ENCODE measurements at regions of chr14 and their contacts with region 1.

Region 1: DNA sequence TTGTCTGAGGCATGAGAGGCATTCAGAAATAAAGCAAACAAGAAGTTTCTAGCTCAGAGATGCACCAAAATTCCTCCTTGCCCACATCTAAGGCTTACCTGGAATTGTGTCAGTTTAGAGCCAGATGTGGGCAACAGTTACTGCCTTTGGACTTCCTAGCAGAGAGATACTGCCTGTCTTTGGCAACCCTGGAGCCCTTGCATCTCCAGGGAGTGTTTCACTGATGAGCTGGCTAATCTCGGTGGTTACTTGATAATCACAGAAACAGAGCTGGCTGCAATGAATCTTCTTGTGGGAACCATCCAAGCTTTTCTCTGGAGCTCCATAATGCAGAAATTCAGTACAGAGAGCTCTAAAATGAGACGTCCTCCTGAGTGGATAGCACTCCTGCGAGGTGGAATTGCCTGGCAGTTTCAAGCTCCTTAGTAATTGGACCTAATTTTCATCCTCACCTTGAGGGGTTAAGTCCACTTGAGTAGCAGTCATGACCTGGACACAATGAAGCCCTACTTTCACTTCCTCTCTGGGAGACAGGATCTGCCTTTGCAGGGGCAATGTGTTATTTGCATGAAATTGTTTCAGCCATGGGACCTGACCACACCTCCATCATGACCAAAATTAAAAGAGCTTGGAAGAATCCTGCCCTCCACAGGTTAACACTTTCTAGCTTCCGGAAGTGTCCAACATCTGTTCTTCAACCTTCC is 108.8 kb upstream of the ARHGAP5 start:
- DNase-seq: peak; percentile 88
- H3K4me3 ChIP-seq: no peak overlapping the region
- H3K27ac ChIP-seq: no peak overlapping the region
- H3K4me1 ChIP-seq: peaks cover 32% of the 10 kb centered on the region
- H3K27me3 ChIP-seq: no peaks in the 10 kb centered on the region
- CTCF ChIP-seq: no peak

Region 2: DNA sequence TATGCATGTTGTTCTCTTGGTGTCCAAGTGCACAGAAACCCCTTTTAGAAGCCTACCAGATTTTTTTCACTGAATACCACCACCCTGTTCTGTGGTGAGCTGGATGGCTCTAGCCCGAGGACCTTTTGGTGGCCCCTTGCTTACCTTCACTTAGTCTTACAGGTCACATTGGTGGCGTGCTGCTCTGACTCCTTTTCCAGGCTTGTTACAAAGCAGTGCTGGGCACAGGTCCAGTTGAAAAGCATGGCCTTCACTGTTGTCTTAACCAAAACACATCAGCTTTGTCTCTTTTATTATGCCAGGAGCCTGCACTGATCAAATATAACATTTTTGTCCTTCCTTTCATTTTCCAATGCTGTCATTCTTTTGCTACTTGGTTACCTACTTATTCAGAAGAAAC is 65.3 kb after region 1 on chr14:
- CTCF ChIA-PET with region 1: no interaction called
- dilution Hi-C with region 1: loop called (anchors 5 kb)
- in situ Hi-C with region 1: no loop called
- intact Hi-C with region 1: no loop called
- DNase-seq: no peak
- H3K4me3 ChIP-seq: no peak overlapping the region
- H3K27ac ChIP-seq: no peak overlapping the region
- H3K4me1 ChIP-seq: peaks cover 8% of the 10 kb centered on the region
- H3K27me3 ChIP-seq: no peaks in the 10 kb centered on the region
- CTCF ChIP-seq: no peak